Activated CD8-positive, alpha-beta T cell treated with anti-CD3 and anti-CD28 coated beads for 36 hours (primary cell): ENCODE measurements at regions of chr3 and their contacts with region 1.

Region 1: GRCh38 chr3:71305231-71306206 is 278.0 kb downstream of the FOXP1 start:
- DNase-seq: peak; percentile 46
- ATAC-seq: peak; percentile 3
- H3K4me3 Mint-ChIP-seq: peak overlapping the region; percentile 89
- H3K27ac Mint-ChIP-seq: peak overlapping the region; percentile 97
- H3K4me1 Mint-ChIP-seq: peaks cover 55% of the 10 kb centered on the region
- H3K27me3 Mint-ChIP-seq: no peaks in the 10 kb centered on the region
- CTCF ChIP-seq: no peak

Region 2: DNA sequence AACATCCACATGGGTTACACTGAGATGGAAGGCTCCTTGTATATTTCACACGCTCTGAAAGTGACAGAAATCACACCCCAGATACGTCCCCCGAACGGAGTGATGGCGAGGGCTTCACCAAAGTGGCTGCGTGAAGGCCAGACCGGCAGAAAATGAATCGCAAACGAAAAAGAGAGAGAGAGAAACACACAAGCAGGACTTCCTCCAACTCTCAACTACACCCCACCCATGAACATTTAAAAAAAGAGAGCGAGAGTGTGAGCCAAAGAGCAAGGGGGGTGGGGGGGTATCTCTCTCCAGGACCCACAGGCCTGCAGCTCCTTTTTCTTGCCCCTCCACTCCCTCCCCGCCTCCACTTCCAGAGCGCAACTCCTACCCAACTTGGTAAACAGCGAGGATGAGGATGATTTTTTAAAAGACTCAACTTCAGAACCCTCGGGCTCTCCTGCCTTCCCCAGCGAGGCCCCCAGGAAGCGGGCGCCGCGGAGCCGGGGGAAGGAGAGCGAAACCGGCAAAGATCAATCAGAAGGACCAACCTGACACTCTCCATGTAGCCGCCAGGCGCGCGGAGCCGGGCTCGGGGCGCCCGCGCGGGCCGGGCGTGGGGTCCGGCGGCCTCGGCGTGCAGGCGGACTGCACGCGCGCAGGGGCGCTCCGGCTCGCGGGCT is 241.1 kb before region 1 on chr3:
- CTCF ChIA-PET with region 1: interaction called, 3 read pairs
- POLR2A ChIA-PET with region 1: interaction called, 93 read pairs
- intact Hi-C with region 1: loop called (anchors 5 kb)
- DNase-seq: peak; percentile 71
- ATAC-seq: peak; percentile 17
- H3K4me3 Mint-ChIP-seq: no peak overlapping the region
- H3K27ac Mint-ChIP-seq: no peak overlapping the region
- H3K4me1 Mint-ChIP-seq: peaks cover 59% of the 10 kb centered on the region
- H3K27me3 Mint-ChIP-seq: no peaks in the 10 kb centered on the region
- CTCF ChIP-seq: no peak

Region 3: DNA sequence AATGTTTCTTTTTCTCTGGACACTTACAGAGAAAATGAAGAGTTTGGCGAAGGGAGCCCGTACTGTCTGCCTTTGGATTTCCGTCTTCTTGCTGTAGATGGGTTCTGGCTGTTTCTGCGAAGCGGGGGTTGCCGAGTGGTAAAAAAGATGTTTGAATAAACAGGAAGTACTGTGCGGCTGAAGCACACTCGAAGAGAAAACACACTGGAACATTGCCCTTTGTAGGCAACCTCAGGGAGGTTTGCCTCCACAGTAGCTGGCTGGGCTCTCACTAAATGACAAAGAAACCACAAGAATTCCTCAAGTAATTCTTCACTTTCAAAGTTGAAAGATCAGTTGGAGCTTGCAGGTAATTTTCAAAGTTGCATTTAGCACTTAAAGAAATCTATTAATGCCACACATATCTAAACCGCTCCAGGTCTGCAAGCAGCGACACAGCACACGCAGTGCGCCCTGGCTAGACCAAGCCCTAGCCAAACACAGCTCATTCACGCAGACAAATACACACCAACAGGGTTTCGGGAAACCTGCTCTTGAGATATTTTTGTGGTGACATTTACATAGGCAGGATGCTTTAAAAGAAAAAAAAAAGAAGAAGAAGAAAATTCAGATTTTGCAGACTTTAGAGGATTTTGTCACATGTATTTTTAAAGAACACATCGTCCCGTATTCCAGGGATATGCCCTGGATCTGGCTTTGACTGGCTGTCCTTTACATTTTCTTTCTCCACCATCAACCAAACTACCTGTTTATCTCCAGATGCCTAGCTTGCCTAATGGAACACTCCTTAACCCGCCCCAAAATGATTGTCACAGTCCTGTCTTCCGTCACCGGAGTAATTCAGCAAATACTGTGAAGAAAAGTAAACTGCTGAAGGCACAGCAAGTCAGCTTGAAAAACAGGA is 174.8 kb before region 1 on chr3:
- CTCF ChIA-PET with region 1: interaction called, 8 read pairs
- POLR2A ChIA-PET with region 1: interaction called, 48 read pairs
- intact Hi-C with region 1: loop called (anchors 1 kb)
- DNase-seq: peak; percentile 87
- ATAC-seq: peak; percentile 62
- H3K4me3 Mint-ChIP-seq: peak overlapping the region; percentile 77
- H3K27ac Mint-ChIP-seq: peak overlapping the region; percentile 93
- H3K4me1 Mint-ChIP-seq: peaks cover 68% of the 10 kb centered on the region
- H3K27me3 Mint-ChIP-seq: no peaks in the 10 kb centered on the region
- CTCF ChIP-seq: no peak

Region 4: DNA sequence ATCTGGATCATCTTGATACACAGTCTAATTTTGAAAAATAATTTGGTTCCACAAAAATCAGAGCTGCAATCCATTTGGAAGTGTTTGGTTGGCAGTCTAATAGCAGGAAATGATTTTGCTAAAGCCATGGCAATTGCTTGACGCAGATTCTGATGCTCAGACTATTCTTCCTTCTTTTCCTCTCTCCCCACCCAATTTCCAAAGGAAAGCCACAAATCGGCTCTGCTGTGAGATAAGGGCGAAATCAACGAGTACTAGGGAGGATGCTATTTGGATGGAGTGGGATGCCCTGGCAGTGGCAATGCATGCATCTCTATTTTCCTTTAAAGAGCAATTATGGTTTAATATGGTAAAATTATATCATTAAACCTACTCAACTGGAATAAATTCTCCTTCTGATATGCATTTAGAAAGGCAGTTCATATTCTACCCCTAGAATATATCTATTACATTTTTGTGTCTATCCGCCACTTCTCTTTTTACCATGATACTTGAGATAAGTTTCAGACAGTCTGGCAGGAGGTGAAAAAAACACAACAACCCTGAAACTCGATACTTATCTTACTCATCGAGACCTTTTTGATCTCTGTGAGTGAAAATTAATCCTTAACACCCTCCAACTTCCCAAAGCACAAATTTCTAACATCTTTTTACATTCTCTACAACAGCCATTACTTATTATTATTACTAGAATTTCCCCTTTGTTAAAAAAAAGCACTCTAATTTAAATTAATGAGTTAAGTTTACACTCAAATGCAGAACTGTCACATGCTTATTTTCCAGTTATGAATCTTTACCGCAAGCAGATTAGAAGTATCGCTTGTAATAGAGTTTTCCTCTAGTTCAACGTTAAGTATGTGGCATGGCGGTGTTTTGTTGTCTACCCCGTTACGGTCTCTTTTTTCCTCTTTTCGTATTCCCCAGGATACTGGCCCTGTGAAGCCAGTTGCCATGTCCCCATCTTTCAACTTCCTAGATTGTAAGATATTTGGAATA is 155.3 kb before region 1 on chr3:
- CTCF ChIA-PET with region 1: no interaction called
- POLR2A ChIA-PET with region 1: no interaction called
- intact Hi-C with region 1: no loop called
- DNase-seq: no peak
- ATAC-seq: peak; percentile 59
- H3K4me3 Mint-ChIP-seq: peak overlapping the region; percentile 34
- H3K27ac Mint-ChIP-seq: peak overlapping the region; percentile 72
- H3K4me1 Mint-ChIP-seq: peaks cover 61% of the 10 kb centered on the region
- H3K27me3 Mint-ChIP-seq: no peaks in the 10 kb centered on the region
- CTCF ChIP-seq: no peak

Region 5: GRCh38 chr3:71360764-71361163 is 55.2 kb after region 1 on chr3:
- CTCF ChIA-PET with region 1: interaction called, 5 read pairs
- POLR2A ChIA-PET with region 1: interaction called, 41 read pairs
- intact Hi-C with region 1: loop called (anchors 5 kb)
- DNase-seq: no peak
- ATAC-seq: peak; percentile 67
- H3K4me3 Mint-ChIP-seq: peak overlapping the region; percentile 59
- H3K27ac Mint-ChIP-seq: peak overlapping the region; percentile 86
- H3K4me1 Mint-ChIP-seq: peaks cover 83% of the 10 kb centered on the region
- H3K27me3 Mint-ChIP-seq: no peaks in the 10 kb centered on the region
- CTCF ChIP-seq: no peak

Region 6: GRCh38 chr3:71397046-71397445 is 91.5 kb after region 1 on chr3:
- CTCF ChIA-PET with region 1: interaction called, 5 read pairs
- POLR2A ChIA-PET with region 1: interaction called, 47 read pairs
- intact Hi-C with region 1: no loop called
- DNase-seq: peak; percentile 49
- ATAC-seq: no peak
- H3K4me3 Mint-ChIP-seq: peak overlapping the region; percentile 73
- H3K27ac Mint-ChIP-seq: peak overlapping the region; percentile 91
- H3K4me1 Mint-ChIP-seq: peaks cover 80% of the 10 kb centered on the region
- H3K27me3 Mint-ChIP-seq: no peaks in the 10 kb centered on the region
- CTCF ChIP-seq: peak; percentile 43

Region 7: DNA sequence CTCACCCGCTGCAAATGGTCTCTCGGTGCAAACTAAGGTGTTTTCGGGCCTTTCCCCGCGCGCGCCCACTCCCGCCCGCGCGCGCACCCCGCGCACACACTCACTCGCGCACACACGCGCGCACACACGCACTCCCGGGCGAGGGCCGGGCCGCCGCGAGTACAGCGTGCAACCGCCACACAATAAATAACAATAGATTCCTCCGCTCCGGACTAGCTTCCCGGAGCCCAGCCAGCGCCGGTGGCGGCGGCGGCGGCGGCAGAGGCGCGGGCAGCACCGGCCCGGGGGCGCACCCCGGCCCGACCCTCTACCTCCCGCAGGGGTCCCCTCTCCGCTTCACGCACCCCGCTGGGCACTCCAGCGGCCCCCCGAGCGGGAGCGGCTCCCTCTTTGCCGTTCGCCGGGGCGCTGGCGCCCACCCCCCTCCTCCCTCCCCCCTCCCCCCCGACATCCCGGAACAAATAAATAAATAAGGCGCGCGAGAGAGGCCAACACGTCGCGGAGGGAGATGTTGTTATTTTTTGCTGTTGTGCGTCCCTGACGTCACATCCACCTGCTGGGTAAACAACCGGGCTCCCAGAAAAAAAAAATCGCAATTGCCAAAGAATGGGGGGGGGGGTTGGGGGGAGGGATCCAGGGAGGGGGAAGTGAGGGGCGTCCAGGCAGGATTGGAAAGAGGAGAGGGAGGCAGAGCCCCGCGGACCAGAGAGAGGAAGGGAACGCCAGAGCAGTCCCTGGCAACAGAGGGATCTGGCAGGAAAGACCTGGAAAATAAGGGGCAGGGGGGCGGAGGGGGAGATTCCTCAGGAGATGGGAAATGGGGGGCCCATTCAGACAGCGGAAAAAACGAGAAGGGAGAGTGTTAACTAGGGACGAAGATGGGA is 278.3 kb after region 1 on chr3 and contains the start of gene FOXP1:
- CTCF ChIA-PET with region 1: interaction called, 5 read pairs
- POLR2A ChIA-PET with region 1: interaction called, 74 read pairs
- intact Hi-C with region 1: loop called (anchors 2 kb)
- DNase-seq: peak; percentile 79
- ATAC-seq: peak; percentile 56
- H3K4me3 Mint-ChIP-seq: peak within 1 kb of the TSS; percentile 84
- H3K27ac Mint-ChIP-seq: peak within 1 kb of the TSS; percentile 99
- H3K4me1 Mint-ChIP-seq: peaks cover 60% of the 10 kb centered on the region
- H3K27me3 Mint-ChIP-seq: no peaks in the 10 kb centered on the region
- CTCF ChIP-seq: no peak
- total RNA-seq, gene FOXP1: 145 to 153 TPM